ENCODE measurements at regions of chr10 and their contacts with region 1.

Region 1: GRCh38 chr10:58943256-58943890 is 233.1 kb upstream of the PHYHIPL start:
- DNase-seq: no peak
- ATAC-seq: no peak
- H3K4me3 ChIP-seq: no peak overlapping the region
- H3K27ac ChIP-seq: no peak overlapping the region
- H3K4me1 ChIP-seq: peaks cover 0 to 21% (median 0%) of the 10 kb centered on the region in 9 donors
- H3K27me3 ChIP-seq: no peaks in the 10 kb centered on the region
- CTCF ChIP-seq: no peak

Region 2: GRCh38 chr10:58662314-58662713 is 281.1 kb before region 1 on chr10:
- intact Hi-C with region 1: no loop called
- DNase-seq: no peak
- ATAC-seq: no peak
- H3K4me3 ChIP-seq: no peak overlapping the region
- H3K27ac ChIP-seq: no peak overlapping the region
- H3K4me1 ChIP-seq: peaks cover 0 to 11% (median 0%) of the 10 kb centered on the region in 9 donors
- H3K27me3 ChIP-seq: no peaks in the 10 kb centered on the region
- CTCF ChIP-seq: no peak

Region 3: DNA sequence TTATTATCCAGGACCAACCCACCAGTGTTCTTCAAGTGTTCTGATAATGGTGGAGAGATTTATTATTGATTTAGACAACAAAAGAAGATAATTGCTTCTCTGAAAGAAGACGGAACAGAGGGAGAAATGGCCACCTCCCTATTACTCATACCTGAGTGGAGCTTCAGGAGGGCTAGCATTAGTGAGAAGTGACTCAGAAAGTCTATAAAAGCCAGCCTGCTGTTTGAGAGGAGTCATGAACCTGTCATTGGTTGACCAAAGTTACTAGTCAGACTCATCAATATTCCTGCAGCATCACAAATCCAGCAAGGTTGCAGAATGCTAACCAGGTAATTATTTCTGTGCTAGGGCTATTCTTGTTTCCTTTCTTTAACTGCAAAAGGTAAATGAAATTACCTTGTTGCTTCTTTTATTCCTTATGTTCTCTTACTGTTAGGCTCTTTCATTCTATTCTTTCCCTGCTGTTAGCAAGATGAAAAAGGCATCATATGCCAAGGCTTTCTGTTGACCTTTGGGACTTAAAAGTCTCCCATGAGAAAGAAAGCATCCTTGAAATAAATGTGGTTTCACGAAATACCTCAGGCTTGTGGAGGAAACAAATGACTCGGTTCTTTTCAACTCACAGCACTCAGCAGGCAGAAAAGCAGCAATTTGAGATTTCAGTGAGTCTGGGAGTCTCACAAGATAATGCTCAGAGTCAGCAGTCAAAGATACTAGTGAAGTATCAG is 23.3 kb before region 1 on chr10:
- intact Hi-C with region 1: loop called in 1 of 10 experiments (anchors 1 kb)
- DNase-seq: no peak
- ATAC-seq: peak in 1 of 8 donors; percentile 21
- H3K4me3 ChIP-seq: no peak overlapping the region
- H3K27ac ChIP-seq: peak overlapping the region in 3 of 10 donors; percentile 13 to 51 (median 37)
- H3K4me1 ChIP-seq: peaks cover 0 to 24% (median 16%) of the 10 kb centered on the region in 9 donors
- H3K27me3 ChIP-seq: no peaks in the 10 kb centered on the region
- CTCF ChIP-seq: no peak

Region 4: DNA sequence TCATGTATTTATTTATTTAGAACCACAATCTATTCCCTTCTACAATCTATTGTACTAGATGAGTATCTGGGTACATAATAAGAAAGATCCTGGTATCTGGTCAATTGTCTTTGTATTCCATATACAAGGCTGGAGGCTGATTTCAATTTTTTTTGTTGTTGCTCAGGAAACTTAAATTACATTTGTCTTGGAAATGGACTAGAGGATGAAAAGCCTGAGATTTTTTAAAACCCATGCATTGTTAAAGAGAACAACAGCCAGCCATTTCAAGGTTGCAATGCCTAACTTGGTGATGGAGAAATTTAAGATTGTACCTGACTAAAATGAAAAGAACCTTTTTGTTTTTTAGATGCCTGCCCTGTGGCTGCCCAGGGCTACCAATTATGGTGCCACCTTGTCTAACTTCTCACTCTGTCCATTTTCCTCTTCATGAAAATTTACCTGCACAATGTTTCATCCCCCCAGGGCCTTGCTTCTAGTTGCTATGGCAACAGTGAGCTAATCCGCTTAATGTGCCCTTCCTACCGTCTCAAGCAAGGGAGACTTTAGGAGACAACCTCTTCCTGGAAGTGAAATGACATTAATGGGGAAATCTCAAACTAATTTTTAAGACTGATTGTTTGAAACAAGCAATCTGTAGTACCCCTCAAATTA is 29.3 kb after region 1 on chr10:
- intact Hi-C with region 1: no loop called
- DNase-seq: no peak
- ATAC-seq: no peak
- H3K4me3 ChIP-seq: no peak overlapping the region
- H3K27ac ChIP-seq: no peak overlapping the region
- H3K4me1 ChIP-seq: peaks cover 0 to 4% (median 0%) of the 10 kb centered on the region in 9 donors
- H3K27me3 ChIP-seq: peaks cover 0 to 3% (median 0%) of the 10 kb centered on the region in 7 donors
- CTCF ChIP-seq: no peak